Right ventricle myocardium superior (tissue), 1 donor: ENCODE measurements at regions of chr10 and their contacts with region 1.

Region 1: DNA sequence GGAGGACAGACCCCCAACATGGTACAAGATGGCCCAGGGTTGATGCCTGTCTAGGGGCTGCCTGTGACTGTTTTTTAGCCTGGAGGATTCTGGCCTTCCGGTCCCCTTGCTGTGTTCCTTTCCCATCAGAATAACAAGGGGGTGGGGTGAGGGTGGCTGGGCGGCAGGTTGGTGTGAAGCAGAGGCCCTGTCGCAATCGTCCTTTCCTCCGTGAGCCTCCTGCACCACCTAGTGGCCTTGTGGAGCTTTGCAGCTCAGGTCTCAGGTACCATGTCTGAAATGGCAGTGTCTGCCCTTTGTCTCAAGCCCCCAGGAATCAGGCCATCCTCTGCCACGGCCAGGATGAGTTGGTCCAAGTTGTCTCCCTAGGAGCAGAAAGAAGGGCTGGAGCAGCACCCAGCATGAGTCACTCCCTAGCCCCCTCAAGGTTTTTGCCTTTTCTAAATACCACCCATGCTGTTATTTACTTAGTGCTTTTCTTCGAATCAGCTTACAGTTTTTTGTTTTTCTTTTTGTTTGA is 24.2 kb downstream of the TACR2 start:
- DNase-seq: peak; percentile 91
- ATAC-seq: peak; percentile 92

Region 2: DNA sequence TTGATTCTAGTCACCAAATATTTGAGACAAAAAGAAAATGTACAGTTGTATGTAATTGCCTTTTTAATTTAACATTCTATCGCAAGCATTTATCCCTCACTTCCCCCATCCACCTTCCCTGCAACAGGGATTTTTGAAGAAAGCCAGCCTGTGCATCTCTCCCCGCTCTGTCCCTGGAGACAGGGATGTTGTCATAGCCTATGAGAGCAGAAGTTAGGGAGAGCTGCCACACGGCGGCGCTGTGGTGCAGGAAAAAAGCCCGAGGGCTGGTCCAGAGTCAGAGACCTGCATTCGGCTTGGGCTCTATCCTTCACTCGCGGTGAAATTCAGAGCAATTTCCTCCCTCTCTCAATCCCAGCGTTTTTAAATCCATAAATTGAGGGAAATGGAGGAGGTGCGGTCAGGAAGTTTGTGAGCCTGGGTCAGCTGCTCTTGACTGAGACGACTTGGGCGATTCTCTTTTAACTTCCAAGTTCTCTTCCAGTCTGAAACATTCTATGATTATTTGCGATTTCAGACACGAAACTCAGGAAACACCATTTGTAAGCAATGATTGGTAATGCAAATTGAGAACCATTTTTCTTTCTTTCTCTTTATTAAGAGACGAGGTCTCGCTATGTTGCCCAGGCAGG is 154.9 kb before region 1 on chr10:
- intact Hi-C with region 1: loop called (anchors 1 kb)
- DNase-seq: peak; percentile 93
- ATAC-seq: peak; percentile 99

Region 3: GRCh38 chr10:69318106-69318866 is 74.3 kb before region 1 on chr10:
- intact Hi-C with region 1: loop called (anchors 5 kb)
- DNase-seq: peak; percentile 94
- ATAC-seq: peak; percentile 98